ENCODE measurements at regions of chr1 and their contacts with region 1.

Region 1: DNA sequence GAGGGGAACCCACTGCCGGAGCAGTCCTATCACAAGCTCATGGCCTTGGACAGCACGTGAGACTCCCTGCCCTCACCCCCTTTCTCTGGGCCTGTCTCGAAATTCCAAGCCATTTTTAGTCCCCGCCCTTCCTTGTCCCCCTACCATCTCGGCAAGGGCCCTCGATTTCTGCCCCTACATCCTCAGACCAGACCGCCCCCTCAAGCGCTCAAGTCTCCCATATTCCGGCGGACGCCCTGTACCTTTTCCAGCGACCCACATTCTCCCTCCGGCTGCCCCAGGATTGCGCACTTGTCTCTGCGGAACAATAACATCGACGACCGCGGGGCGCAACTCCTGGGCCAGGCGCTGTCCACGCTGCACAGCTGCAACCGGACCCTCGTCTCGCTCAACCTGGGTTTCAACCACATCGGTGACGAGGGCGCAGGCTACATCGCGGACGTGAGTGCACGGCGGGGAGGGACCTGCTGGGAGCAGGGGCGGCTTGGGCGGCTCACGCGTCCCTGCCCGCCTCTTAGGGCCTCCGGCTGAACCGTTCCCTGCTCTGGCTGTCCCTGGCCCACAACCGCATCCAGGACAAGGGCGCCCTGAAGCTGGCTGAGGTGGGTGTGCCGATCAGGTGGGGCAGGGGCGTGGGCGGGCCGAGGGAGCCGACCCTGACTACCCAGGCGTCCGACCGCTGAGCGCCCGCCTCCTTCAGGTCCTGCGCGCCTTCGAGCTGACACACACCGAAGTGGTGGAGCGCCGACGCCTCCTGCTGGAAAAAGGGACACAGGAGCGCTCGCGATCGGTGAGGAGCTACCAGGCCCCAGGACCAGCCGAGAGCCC is 7.0 kb downstream of the LRRC71 start:
- DNase-seq: peak; percentile 60
- H3K4me3 Mint-ChIP-seq: peak overlapping the region; percentile 23
- H3K27ac Mint-ChIP-seq: no peak overlapping the region
- H3K4me1 Mint-ChIP-seq: peaks cover 26% of the 10 kb centered on the region
- H3K27me3 Mint-ChIP-seq: peaks cover 76% of the 10 kb centered on the region

Region 2: DNA sequence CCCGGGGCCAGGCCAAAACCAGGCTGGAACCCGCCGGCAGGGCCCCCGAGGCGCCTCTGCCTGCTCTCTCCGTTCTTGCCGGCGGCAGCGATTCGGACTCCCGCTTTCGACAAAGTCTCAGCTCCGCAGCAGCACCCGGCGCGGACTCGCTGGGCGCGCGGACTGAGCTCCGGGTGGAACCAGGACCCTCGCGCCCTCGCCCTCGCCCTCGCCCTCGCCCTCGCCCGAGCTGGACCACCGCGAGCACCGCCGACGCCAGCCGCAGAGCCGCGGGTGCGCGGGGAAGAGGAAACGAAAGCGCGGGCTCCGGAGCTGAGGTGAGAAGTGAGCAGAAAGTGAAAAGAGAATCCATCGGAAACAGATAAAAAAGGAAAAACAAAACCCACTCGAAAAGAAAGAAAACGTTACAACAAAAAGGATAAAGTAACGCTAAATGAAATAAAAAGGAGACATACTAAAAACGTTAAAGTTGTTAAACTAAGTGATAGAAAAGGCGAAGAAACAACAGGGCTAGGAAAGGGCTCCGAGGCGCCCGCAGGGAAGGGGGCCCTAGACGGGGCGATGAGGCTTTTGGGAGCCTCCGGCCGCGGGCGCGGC is 491.8 kb before region 1 on chr1:
- intact Hi-C with region 1: loop called (anchors 10 kb)
- DNase-seq: peak; percentile 15
- H3K4me3 Mint-ChIP-seq: peak overlapping the region; percentile 70
- H3K27ac Mint-ChIP-seq: peak overlapping the region; percentile 36
- H3K4me1 Mint-ChIP-seq: peaks cover 40% of the 10 kb centered on the region
- H3K27me3 Mint-ChIP-seq: peaks cover 82% of the 10 kb centered on the region

Region 3: GRCh38 chr1:156689035-156689952 is 238.1 kb before region 1 on chr1:
- intact Hi-C with region 1: loop called (anchors 10 kb)
- DNase-seq: peak; percentile 57
- H3K4me3 Mint-ChIP-seq: no peak overlapping the region
- H3K27ac Mint-ChIP-seq: no peak overlapping the region
- H3K4me1 Mint-ChIP-seq: peaks cover 20% of the 10 kb centered on the region
- H3K27me3 Mint-ChIP-seq: peaks cover 51% of the 10 kb centered on the region

Region 4: DNA sequence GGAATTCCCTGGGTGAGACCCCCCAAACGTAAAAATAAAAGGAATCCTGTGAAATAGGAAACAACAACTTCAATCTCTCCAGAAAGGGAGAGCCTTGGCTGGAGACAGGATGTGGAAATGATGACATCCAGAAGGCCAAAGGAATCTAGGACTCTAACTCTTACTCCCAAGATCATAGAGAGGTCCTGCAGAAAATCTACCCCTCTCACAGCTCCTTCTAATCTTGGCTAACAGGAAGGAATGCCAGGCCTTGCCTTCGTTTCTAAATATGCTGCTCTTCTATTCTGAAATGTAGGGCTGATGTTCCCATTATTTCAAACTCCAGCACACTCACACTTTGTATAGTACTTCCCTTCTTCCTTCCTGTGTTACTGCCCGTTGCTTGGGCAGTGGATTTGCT is 77.4 kb after region 1 on chr1:
- intact Hi-C with region 1: no loop called
- DNase-seq: no peak
- H3K4me3 Mint-ChIP-seq: no peak overlapping the region
- H3K27ac Mint-ChIP-seq: no peak overlapping the region
- H3K4me1 Mint-ChIP-seq: no peaks in the 10 kb centered on the region
- H3K27me3 Mint-ChIP-seq: peaks cover 33% of the 10 kb centered on the region

Measured in activated T-helper 2 cell treated with anti-CD3 and anti-CD28 coated beads, Interferon-gamma antibody, Interleukin-2, Interleukin-4, amounts not matched to agents 10 μg/mL and 5 μg/mL and 100 μg/mL, durations not matched to agents 14 hours and 24 hours and 36 hours (primary cell).